H1 (cell line): ENCODE measurements at regions of chr14 and their contacts with region 1.

Region 1: GRCh38 chr14:103788086-103788485 is 59.3 kb downstream of the PPP1R13B start:
- DNase-seq: no peak
- H3K4me3 ChIP-seq: no peak overlapping the region
- H3K27ac ChIP-seq: no peak overlapping the region
- H3K4me1 ChIP-seq: no peaks in the 10 kb centered on the region
- H3K27me3 ChIP-seq: no peaks in the 10 kb centered on the region
- CTCF ChIP-seq: no peak
- EP300 ChIP-seq: no peak
- POLR2A ChIP-seq: no peak
- RAD21 ChIP-seq: no peak

Region 2: DNA sequence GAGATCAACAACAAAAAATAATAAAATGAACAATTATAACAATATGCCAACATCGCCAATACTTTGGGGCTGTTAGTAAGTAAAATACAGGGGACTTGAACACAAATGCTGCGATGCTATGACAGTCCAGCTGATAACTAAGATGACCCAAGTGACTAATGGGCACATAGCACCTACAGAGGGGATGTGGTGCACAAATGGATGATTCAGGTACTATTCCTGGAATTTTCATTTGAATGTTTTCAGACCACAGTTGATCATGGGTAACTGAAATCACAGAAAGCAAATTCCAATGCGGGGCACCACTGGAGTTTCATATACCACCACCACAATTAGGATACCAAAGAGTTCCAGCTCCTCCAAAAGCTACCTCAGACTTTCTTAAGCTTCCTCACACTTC is 1112.7 kb before region 1 on chr14:
- CTCF ChIA-PET with region 1: no interaction called
- POLR2A ChIA-PET with region 1: no interaction called
- DNase-seq: no peak
- H3K4me3 ChIP-seq: no peak overlapping the region
- H3K27ac ChIP-seq: no peak overlapping the region
- H3K4me1 ChIP-seq: no peaks in the 10 kb centered on the region
- H3K27me3 ChIP-seq: no peaks in the 10 kb centered on the region
- CTCF ChIP-seq: no peak
- EP300 ChIP-seq: no peak
- POLR2A ChIP-seq: no peak
- RAD21 ChIP-seq: no peak

Region 3: GRCh38 chr14:103770902-103771301 is 17.2 kb before region 1 on chr14:
- CTCF ChIA-PET with region 1: interaction called, 10 read pairs
- POLR2A ChIA-PET with region 1: no interaction called
- DNase-seq: no peak
- H3K4me3 ChIP-seq: no peak overlapping the region
- H3K27ac ChIP-seq: no peak overlapping the region
- H3K4me1 ChIP-seq: no peaks in the 10 kb centered on the region
- H3K27me3 ChIP-seq: no peaks in the 10 kb centered on the region
- CTCF ChIP-seq: peak; percentile 1 to 59 (median 39)
- EP300 ChIP-seq: no peak
- POLR2A ChIP-seq: no peak
- RAD21 ChIP-seq: peak; percentile 48 to 64